ENCODE measurements at regions of chr11 and their contacts with region 1.

Region 1: DNA sequence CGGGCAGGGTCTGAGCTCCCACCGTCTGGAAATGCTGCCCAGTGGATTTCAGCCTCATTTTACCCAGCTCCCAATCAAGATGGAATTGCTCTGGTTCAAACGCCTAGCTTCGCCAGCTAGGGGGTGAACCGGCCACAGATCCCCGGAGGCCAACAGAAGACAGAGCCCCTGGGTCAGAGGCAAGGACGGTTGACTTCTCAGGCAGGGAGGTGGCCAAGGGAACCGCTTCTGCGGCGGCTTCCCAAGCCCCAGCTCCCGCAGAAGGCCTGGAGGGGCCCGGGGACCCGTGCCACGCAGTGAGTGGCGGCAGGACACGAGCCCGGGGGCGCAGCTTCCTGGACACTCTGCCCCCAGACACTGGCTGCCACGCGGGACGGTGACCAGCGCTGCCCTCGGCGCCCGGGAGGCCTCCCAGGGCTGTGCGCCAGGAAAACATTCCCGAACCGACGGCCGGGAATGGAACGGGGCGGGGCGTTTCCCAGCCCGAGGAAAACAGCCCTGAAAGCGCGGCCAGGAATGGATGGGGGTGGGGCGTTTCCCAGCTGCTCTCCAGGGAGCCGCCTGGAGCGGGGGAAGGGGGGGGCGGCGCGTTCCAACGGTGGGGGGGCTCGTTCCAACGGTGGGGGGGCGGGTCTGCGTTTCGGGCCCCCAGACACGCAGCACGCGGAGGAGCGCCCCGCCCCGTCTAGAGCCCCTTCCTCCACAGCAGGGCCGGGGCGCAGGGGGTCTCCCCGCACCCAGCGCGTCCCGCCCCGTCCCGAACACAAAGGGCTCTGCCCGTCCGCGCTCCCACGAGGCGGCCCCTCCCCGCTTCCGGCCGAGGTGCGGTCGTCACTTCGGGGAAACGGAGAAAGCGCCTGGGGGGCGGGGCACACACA is 13.5 kb upstream of the B4GALNT4 start:
- DNase-seq: peak; percentile 82
- H3K4me3 ChIP-seq: peak overlapping the region in 1 of 3 donors; percentile 28
- H3K27ac ChIP-seq: peak overlapping the region; percentile 77 to 98 (median 90)
- H3K4me1 ChIP-seq: peaks cover 24 to 29% of the 10 kb centered on the region in 2 donors
- H3K27me3 ChIP-seq: no peaks in the 10 kb centered on the region
- CTCF ChIP-seq: no peak
- POLR2A ChIP-seq: no peak

Region 2: DNA sequence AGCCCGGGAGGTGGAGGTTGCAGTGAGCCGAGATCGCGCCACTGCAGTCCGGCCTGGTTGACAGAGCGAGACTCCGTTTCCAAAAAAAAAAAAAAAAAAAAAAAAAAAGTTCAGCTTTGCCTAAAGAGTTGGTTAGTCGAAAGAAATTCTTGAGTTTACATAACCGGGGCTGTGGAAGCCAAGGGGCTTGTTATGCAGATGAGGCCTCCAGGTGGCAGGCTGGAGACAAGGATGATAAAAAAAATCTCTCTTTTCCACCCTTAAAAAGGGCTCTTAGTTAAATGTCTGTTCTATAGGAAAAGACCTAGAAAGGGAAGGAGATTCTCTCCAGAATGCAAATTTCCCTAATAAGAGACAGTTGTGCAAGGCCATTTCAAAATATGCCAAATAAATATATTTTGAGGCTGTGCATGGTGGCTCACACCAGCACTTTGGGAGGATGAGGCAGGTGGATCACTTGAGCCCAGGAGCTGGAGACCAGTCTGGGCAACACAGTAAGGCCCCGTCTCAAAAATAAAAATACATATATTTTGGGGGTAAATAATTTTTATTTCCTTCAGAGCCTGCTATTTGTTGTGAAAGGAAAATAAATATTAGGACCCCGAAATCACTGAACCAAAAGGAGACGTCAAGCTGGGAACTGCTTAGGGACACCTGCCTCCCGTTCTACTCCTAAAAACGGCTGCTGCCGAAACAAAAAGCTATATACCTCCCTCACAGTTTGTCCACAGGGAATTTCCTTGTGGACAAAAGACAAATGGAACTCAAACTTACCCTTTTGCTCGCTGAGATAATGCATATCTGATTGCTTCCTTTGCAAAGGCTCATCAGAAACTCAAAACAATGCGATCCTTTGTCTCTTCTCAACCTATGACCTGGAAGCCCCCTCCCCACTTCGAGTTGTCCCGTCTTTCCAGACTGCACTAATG is 50.6 kb before region 1 on chr11:
- intact Hi-C with region 1: loop called (anchors 5 kb)
- DNase-seq: peak; percentile 79
- H3K4me3 ChIP-seq: no peak overlapping the region
- H3K27ac ChIP-seq: no peak overlapping the region
- H3K4me1 ChIP-seq: peaks cover 4 to 16% of the 10 kb centered on the region in 2 donors
- H3K27me3 ChIP-seq: no peaks in the 10 kb centered on the region
- CTCF ChIP-seq: peak; percentile 18 to 75 (median 70)
- POLR2A ChIP-seq: no peak

Region 3: DNA sequence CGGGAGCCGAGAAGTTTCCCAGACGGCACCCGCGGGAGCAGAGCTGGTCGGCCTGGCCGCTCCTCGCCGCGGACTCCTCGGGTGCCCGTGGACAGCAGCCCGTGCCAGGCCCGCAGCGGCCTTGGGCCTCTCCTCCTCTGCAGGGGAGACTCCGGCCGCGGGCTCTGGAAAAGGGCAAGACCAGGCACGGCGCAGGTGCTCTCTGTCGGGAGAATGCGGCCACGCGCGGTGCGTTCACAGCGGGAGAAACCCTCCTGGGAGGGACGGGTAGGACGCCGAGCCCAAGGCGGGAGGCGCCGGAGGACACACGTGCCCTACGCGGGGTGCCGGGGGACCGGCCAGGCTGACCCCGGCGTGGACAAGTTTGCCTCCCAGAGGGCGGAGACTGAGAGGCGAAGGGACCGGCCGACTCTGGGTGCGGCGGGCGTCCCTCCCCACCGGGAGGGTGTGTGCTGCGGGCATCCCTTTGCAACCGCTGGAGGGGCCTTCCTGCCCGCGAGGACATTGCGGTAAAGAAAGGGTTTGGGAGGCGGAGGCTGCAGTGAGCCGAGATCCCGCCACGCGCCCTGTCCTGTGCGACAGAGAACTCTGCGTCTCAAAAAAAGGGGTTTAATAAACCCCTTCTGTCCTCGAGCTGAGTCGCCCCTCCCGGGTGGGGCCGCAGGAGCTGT is 39.7 kb before region 1 on chr11:
- intact Hi-C with region 1: loop called (anchors 5 kb)
- DNase-seq: peak in 1 of 2 donors; percentile 20
- H3K4me3 ChIP-seq: peak overlapping the region in 1 of 3 donors; percentile 41
- H3K27ac ChIP-seq: peak overlapping the region; percentile 51 to 88 (median 71)
- H3K4me1 ChIP-seq: peaks cover 0 to 15% of the 10 kb centered on the region in 2 donors
- H3K27me3 ChIP-seq: no peaks in the 10 kb centered on the region
- CTCF ChIP-seq: no peak
- POLR2A ChIP-seq: no peak

Measured in thyroid gland (tissue), 4 donors.